Calu3 (cell line): ENCODE measurements at regions of chrX and their contacts with region 1.

Region 1: GRCh38 chrX:57121162-57121741 is at the start of gene SPIN2B:
- DNase-seq: peak; percentile 81
- H3K4me3 Mint-ChIP-seq: peak within 1 kb of the TSS; percentile 94
- H3K27ac Mint-ChIP-seq: peak within 1 kb of the TSS; percentile 94
- H3K4me1 Mint-ChIP-seq: no peaks in the 10 kb centered on the region
- H3K27me3 Mint-ChIP-seq: no peaks in the 10 kb centered on the region
- CTCF ChIP-seq: no peak
- total RNA-seq, gene SPIN2B: 12.8 and 14.0 TPM in 2 replicates

Region 2: DNA sequence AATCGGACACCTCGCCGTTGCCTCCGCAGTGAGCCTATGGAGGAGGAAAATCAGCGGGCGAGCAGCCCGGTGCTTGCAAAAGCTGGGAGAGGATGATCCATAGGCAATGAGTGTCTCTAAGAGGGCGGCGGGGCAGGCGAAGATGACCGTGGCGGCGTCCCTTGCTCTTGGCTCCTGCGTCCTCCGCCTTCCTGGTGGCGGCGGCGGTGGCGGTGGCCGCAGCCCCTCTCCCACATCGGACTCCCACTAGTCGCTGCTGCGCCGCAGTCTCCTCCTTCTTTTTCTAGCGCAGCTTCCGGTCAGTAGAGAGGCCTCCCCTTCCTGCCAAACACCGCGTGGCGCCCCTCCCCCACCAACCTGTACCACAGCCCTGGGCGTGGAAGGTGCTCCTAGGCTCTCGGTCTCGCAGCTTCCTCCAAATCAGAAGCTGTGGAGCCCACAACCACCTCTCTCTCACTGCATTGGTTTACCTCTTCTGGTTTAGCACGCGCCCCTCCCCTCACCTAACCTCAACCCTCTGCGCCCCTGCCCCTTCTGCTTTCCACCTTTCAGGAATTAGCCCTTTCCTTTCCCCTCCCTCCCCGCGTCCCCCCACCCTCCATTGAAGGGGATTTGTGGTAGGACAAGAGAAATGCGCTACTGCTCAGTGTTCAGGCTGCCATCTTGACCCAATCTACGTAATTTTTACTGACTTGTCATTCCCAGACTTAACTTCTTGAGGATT is 125.8 kb before region 1 on chrX and contains the start of gene SPIN3:
- CTCF ChIA-PET with region 1: no interaction called
- intact Hi-C with region 1: loop called (anchors 5 kb)
- DNase-seq: peak; percentile 94
- H3K4me3 Mint-ChIP-seq: peak within 1 kb of the TSS; percentile 87
- H3K27ac Mint-ChIP-seq: peak within 1 kb of the TSS; percentile 82
- H3K4me1 Mint-ChIP-seq: peaks cover 26% of the 10 kb centered on the region
- H3K27me3 Mint-ChIP-seq: no peaks in the 10 kb centered on the region
- CTCF ChIP-seq: no peak
- total RNA-seq, gene SPIN3: 19.4 and 26.2 TPM in 2 replicates

Region 3: GRCh38 chrX:57177070-57177469 is 55.8 kb after region 1 on chrX:
- CTCF ChIA-PET with region 1: no interaction called
- intact Hi-C with region 1: no loop called
- DNase-seq: no peak
- H3K4me3 Mint-ChIP-seq: no peak overlapping the region
- H3K27ac Mint-ChIP-seq: no peak overlapping the region
- H3K4me1 Mint-ChIP-seq: no peaks in the 10 kb centered on the region
- H3K27me3 Mint-ChIP-seq: no peaks in the 10 kb centered on the region
- CTCF ChIP-seq: no peak